ENCODE measurements at regions of chr11 and their contacts with region 1.

Region 1: GRCh38 chr11:9208726-9209501 is 56.2 kb downstream of the DENND5A start:
- DNase-seq: no peak
- H3K4me3 ChIP-seq: peak overlapping the region in 1 of 59 donors; percentile 8
- H3K27ac ChIP-seq: peak overlapping the region in 56 of 59 donors; percentile 8 to 85 (median 70)
- H3K27me3 ChIP-seq: no peaks in the 10 kb centered on the region
- CTCF ChIP-seq: no peak

Region 2: GRCh38 chr11:8911029-8911826 is 297.7 kb before region 1 on chr11 and contains the start of gene AKIP1:
- intact Hi-C with region 1: no loop called
- DNase-seq: peak; percentile 87 to 97 (median 94)
- H3K4me3 ChIP-seq: peak within 1 kb of the TSS; percentile 68 to 99 (median 93)
- H3K27ac ChIP-seq: peak within 1 kb of the TSS; percentile 81 to 98 (median 94)
- H3K27me3 ChIP-seq: no peaks in the 10 kb centered on the region
- CTCF ChIP-seq: peak in 11 of 56 donors; percentile 6 to 33 (median 16)
- total RNA-seq, gene AKIP1: 15.2 to 35.0 (median 22.7) TPM

Region 3: GRCh38 chr11:9259981-9260837 is 51.3 kb after region 1 on chr11:
- intact Hi-C with region 1: loop called in 1 of 2 experiments (anchors 2 kb)
- DNase-seq: no peak
- H3K4me3 ChIP-seq: peak overlapping the region in 1 of 59 donors; percentile 9
- H3K27ac ChIP-seq: peak overlapping the region in 48 of 59 donors; percentile 0 to 79 (median 54)
- H3K27me3 ChIP-seq: no peaks in the 10 kb centered on the region
- CTCF ChIP-seq: peak in 53 of 56 donors; percentile 8 to 63 (median 42)